ENCODE measurements at regions of chr10 and their contacts with region 1.

Region 1: DNA sequence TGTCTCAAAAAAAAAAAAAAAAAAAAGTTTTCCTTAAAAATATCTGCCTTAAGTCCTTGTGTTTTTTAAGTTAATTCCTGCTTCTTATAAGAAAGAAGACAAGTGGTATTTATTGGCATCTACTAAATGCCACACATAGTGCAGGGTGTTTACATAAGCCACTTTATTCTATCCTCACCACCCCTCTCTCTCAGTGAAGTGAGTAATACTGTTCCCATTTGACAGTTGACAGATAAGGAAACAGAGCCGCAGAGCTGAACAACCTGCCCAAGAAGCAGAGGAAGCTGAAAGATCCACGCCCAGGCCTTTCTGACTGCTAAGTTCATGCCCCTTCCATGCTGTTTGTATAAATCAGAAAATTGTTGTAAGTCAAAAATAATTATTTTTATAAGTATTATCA is 54.1 kb downstream of the ABLIM1 start:
- DNase-seq: peak in 1 of 14 experiments; percentile 19
- ATAC-seq: no peak
- H3K4me3 ChIP-seq: no peak overlapping the region
- H3K4me3 Mint-ChIP-seq: no peak overlapping the region
- H3K27ac ChIP-seq: no peak overlapping the region
- H3K27ac Mint-ChIP-seq: no peak overlapping the region
- H3K4me1 ChIP-seq: peaks cover 4% of the 10 kb centered on the region
- H3K4me1 Mint-ChIP-seq: peaks cover 7% of the 10 kb centered on the region
- H3K27me3 ChIP-seq: no peaks in the 10 kb centered on the region
- H3K27me3 Mint-ChIP-seq: no peaks in the 10 kb centered on the region
- CTCF ChIP-seq: no peak

Region 2: GRCh38 chr10:114631666-114632417 is 27.9 kb after region 1 on chr10:
- CTCF ChIA-PET with region 1: no interaction called
- POLR2A ChIA-PET with region 1: no interaction called
- intact Hi-C with region 1: loop called in 1 of 2 experiments (anchors 2 kb)
- DNase-seq: peak in 8 of 14 experiments; percentile 0 to 49 (median 14)
- ATAC-seq: peak; percentile 72
- H3K4me3 ChIP-seq: peak overlapping the region; percentile 57
- H3K4me3 Mint-ChIP-seq: peak overlapping the region; percentile 87
- H3K27ac ChIP-seq: no peak overlapping the region
- H3K27ac Mint-ChIP-seq: no peak overlapping the region
- H3K4me1 ChIP-seq: peaks cover 16% of the 10 kb centered on the region
- H3K4me1 Mint-ChIP-seq: peaks cover 25% of the 10 kb centered on the region
- H3K27me3 ChIP-seq: peaks cover 24 to 29% of the 10 kb centered on the region in 2 experiments
- H3K27me3 Mint-ChIP-seq: peaks cover 61% of the 10 kb centered on the region
- CTCF ChIP-seq: no peak